HEK293 (cell line): ENCODE measurements at regions of chr2 and their contacts with region 1.

Region 1: GRCh38 chr2:149313512-149313972 is 16.8 kb upstream of the LYPD6 start:
- H3K4me3 ChIP-seq: no peak overlapping the region
- H3K27ac ChIP-seq: no peak overlapping the region
- H3K4me1 ChIP-seq: peaks cover 10% of the 10 kb centered on the region
- CTCF ChIP-seq: peak; percentile 69

Region 2: GRCh38 chr2:149330126-149331022 is 16.8 kb after region 1 on chr2 and contains the start of gene LYPD6:
- CTCF ChIA-PET with region 1: interaction called, 12 read pairs
- POLR2A ChIA-PET with region 1: interaction called, 4 read pairs
- H3K4me3 ChIP-seq: peak within 1 kb of the TSS; percentile 78
- H3K27ac ChIP-seq: peak within 1 kb of the TSS; percentile 94
- H3K4me1 ChIP-seq: peaks cover 4% of the 10 kb centered on the region; the same call in 1 of the 2 replicates
- CTCF ChIP-seq: peak; percentile 67